Activated CD4-positive, alpha-beta memory T cell treated with anti-CD3 and anti-CD28 coated beads for 36 hours (primary cell): ENCODE measurements at regions of chr17 and their contacts with region 1.

Region 1: DNA sequence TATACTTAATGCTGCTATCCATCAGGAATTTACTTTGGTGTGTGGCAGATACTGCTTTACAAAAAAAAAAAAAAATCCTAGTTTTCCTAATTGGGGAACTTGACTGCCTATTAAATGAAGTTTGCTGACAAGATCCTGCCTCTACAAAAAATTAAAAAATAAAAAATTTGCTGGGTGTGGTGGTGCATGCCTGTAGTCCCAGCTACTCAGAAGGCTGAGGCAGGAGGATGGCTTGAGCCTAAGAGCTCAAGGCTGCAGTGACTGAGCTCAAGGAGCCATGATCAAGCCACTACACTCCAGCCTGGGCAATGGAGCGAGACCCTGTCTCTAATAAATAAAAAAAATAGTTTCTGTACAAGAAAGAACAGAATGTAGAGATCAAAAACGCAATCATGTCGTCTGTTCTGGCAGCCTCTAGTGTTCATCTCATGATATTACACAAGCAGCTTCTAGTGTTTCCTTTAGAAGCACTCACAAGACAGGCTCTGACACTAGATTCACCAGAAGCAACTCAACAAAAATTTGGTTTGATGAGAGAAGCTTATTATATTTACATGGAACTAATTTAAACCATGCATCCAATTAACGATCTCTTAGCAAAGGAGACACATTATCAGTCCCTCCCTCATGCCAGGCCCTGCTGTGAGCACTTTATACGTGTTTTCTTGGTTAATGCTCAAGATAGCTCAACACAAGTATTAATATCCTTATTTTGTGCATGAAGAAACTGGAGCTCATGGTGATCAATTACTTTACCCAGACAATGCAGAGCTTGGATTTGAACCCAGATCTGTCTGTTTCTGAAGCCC is 6.8 kb upstream of the KRTAP17-1 start:
- DNase-seq: no peak
- H3K4me3 Mint-ChIP-seq: no peak overlapping the region
- H3K27ac Mint-ChIP-seq: no peak overlapping the region
- H3K4me1 Mint-ChIP-seq: peaks cover 39% of the 10 kb centered on the region
- H3K27me3 Mint-ChIP-seq: no peaks in the 10 kb centered on the region

Region 2: DNA sequence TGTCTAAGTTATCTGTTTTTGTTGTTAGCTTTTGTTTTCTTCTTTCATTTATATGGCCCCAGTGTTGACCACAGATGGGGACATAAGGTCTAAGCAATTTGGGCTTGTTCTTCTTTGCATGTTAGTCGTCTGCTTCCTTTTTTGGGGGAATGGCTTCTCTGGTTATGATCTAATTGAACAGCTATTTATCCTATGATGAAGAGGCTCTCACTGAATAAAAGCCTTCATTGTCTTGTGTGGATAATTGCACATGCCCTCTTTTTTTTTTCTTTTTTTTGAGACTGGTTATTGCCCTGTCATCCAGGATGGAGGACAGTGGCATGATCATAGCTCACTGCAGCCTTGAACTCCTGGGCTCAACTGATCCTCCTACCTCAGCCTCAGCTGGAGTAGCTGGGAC is 688.4 kb before region 1 on chr17:
- CTCF ChIA-PET with region 1: no interaction called
- POLR2A ChIA-PET with region 1: no interaction called
- intact Hi-C with region 1: no loop called
- DNase-seq: no peak
- H3K4me3 Mint-ChIP-seq: no peak overlapping the region
- H3K27ac Mint-ChIP-seq: peak overlapping the region; percentile 19
- H3K4me1 Mint-ChIP-seq: peaks cover 17% of the 10 kb centered on the region
- H3K27me3 Mint-ChIP-seq: no peaks in the 10 kb centered on the region

Region 3: GRCh38 chr17:40803617-40804082 is 518.6 kb before region 1 on chr17:
- CTCF ChIA-PET with region 1: no interaction called
- POLR2A ChIA-PET with region 1: no interaction called
- intact Hi-C with region 1: loop called (anchors 10 kb)
- DNase-seq: peak; percentile 86
- H3K4me3 Mint-ChIP-seq: no peak overlapping the region
- H3K27ac Mint-ChIP-seq: no peak overlapping the region
- H3K4me1 Mint-ChIP-seq: peaks cover 2% of the 10 kb centered on the region
- H3K27me3 Mint-ChIP-seq: peaks cover 36% of the 10 kb centered on the region

Region 4: GRCh38 chr17:40909351-40909750 is 412.9 kb before region 1 on chr17:
- CTCF ChIA-PET with region 1: interaction called, 4 read pairs
- POLR2A ChIA-PET with region 1: no interaction called
- intact Hi-C with region 1: loop called (anchors 2 kb)
- DNase-seq: peak; percentile 71
- H3K4me3 Mint-ChIP-seq: no peak overlapping the region
- H3K27ac Mint-ChIP-seq: no peak overlapping the region
- H3K4me1 Mint-ChIP-seq: no peaks in the 10 kb centered on the region
- H3K27me3 Mint-ChIP-seq: peaks cover 24% of the 10 kb centered on the region

Region 5: GRCh38 chr17:41308251-41308917 is 13.9 kb before region 1 on chr17:
- CTCF ChIA-PET with region 1: interaction called, 18 read pairs
- POLR2A ChIA-PET with region 1: no interaction called
- intact Hi-C with region 1: loop called (anchors 2 kb)
- DNase-seq: peak; percentile 80
- H3K4me3 Mint-ChIP-seq: peak overlapping the region; percentile 55
- H3K27ac Mint-ChIP-seq: peak overlapping the region; percentile 82
- H3K4me1 Mint-ChIP-seq: peaks cover 46% of the 10 kb centered on the region
- H3K27me3 Mint-ChIP-seq: no peaks in the 10 kb centered on the region